PC-3 (cell line): ENCODE measurements at regions of chr18 and their contacts with region 1.

Region 1: DNA sequence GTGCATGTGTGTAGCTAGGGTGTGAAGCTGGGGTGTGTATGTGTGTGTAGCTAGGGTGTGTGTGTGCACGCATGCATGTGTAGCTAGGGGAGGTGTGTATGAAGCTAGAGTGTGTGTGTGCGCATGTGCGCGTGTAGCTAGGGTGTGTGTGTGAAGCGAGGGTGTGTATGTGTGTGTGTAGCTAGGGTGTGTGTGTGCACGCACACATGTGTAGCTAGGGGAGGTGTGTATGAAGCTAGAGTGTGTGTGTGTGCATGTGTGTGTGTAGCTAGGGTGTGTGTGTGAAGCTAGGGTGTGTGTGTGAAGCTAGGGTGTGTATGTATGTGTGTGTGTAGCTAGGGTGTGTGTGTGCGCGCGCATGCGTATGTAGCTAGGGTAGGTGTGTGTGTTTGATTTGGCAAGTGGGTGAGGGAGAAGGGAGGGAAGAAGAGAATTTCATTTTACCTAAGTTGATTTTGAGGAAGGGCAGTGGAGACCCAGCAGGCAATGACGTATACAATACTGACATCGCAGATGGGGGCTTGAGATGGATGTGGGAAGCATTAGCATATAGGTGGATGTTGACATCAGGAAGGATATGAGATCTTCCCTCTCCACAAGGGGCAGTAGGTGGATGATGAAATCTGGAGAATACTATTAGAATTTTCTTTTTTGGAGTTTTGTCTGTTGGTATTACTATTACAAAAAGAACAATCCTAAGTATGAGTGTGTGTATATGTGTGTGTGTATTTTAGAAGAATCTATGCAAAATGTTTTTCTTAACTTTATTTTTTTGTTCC is 70.7 kb downstream of the PRELID3A start:
- DNase-seq: no peak
- ATAC-seq: peak; percentile 37; the same call in 1 of the 2 replicates
- H3K4me3 ChIP-seq: no peak overlapping the region
- H3K27ac ChIP-seq: no peak overlapping the region
- H3K4me1 ChIP-seq: no peaks in the 10 kb centered on the region
- H3K27me3 ChIP-seq: no peaks in the 10 kb centered on the region
- CTCF ChIP-seq: peak; percentile 37; the same call in 1 of the 2 replicates

Region 2: DNA sequence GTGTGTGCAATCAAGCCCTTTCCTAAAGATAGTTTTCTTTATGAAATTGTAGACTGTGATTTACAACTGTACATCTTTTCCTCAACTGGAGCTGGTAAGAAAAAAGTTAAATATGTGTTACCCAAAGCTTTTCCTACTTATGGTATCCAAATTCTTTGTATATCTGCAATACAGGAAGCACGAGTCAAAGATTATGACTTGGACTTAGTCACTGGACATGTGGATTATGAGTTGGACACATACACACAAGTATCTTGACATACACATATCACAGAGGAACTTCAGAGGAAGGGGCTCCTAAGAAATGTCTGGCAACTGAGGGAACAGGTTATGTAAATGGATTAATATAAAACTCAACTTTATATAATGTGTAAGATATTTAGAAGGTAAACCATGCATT is 35.5 kb before region 1 on chr18:
- CTCF ChIA-PET with region 1: no interaction called
- POLR2A ChIA-PET with region 1: no interaction called
- intact Hi-C with region 1: no loop called
- DNase-seq: peak; percentile 42
- ATAC-seq: peak; percentile 31
- H3K4me3 ChIP-seq: no peak overlapping the region
- H3K27ac ChIP-seq: no peak overlapping the region
- H3K4me1 ChIP-seq: no peaks in the 10 kb centered on the region
- H3K27me3 ChIP-seq: no peaks in the 10 kb centered on the region
- CTCF ChIP-seq: no peak

Region 3: GRCh38 chr18:12628706-12629702 is 150.5 kb after region 1 on chr18:
- CTCF ChIA-PET with region 1: no interaction called
- POLR2A ChIA-PET with region 1: interaction called, 23 read pairs
- intact Hi-C with region 1: no loop called
- DNase-seq: peak; percentile 73
- ATAC-seq: peak; percentile 77
- H3K4me3 ChIP-seq: no peak overlapping the region
- H3K27ac ChIP-seq: peak overlapping the region; percentile 76
- H3K4me1 ChIP-seq: peaks cover 35% of the 10 kb centered on the region
- H3K27me3 ChIP-seq: no peaks in the 10 kb centered on the region
- CTCF ChIP-seq: no peak